Heart right ventricle (tissue), 16 donors: ENCODE measurements at regions of chr19 and their contacts with region 1.

Region 1: GRCh38 chr19:8654591-8655339 is 24.3 kb downstream of the NFILZ start:
- DNase-seq: peak in 1 of 2 donors; percentile 58
- ATAC-seq: peak in 6 of 8 donors; percentile 49 to 82 (median 66)
- H3K4me3 ChIP-seq: peak overlapping the region in 4 of 10 donors; percentile 11 to 25 (median 19)
- H3K27ac ChIP-seq: no peak overlapping the region
- H3K4me1 ChIP-seq: peaks cover 0 to 23% (median 0%) of the 10 kb centered on the region in 9 donors
- H3K27me3 ChIP-seq: peaks cover 0 to 40% (median 28%) of the 10 kb centered on the region in 7 donors
- CTCF ChIP-seq: peak; percentile 96 to 99 (median 98)

Region 2: GRCh38 chr19:8690753-8691539 is 36.2 kb after region 1 on chr19:
- intact Hi-C with region 1: loop called in 1 of 10 experiments (anchors 5 kb)
- DNase-seq: no peak
- ATAC-seq: no peak
- H3K4me3 ChIP-seq: no peak overlapping the region
- H3K27ac ChIP-seq: no peak overlapping the region
- H3K4me1 ChIP-seq: no peaks in the 10 kb centered on the region
- H3K27me3 ChIP-seq: peaks cover 0 to 55% (median 15%) of the 10 kb centered on the region in 7 donors
- CTCF ChIP-seq: no peak

Region 3: DNA sequence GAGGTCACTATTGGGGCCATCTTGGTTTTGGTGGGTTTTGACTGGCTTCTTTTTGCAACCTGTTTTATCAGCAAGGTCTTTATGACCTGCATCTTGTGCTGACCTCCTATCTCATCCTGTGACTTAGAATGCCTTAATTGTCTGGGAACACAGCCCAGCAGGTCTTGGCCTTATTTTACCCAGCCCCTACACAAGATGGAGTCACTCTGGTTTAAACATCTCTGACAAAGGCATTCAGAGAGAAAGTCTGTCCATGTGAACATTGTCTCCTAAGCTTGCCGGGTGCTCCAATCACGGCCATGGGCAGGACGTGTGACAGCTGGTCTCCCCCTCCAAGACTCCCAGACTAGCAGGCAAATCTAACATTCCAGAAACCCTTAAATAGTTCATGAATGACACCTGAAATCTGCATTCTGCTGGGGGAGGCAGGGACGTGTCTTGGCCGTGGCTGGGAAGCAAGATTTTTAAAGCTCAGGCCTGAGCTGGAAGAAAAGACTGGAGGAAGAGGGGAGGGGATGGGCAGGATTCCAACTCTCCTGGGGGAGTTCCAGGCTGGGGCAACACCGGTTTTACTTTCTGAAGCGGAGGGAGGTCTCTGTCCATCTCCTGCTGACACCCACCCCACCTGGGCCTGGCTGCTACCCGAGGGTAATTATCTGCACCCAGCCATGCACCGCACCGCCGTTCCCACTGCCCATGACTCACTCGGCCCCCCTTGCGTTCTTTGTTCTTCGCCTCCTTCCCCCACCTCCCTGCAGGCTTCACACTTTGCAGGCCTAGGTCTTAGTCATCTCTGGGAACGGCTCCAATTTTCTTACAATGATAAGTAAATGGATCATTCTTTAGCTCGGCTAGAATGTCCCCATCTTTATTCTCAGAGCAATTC is 420.5 kb after region 1 on chr19:
- intact Hi-C with region 1: loop called in 7 of 10 experiments (anchors 1 to 2 kb)
- DNase-seq: peak; percentile 44 to 61
- ATAC-seq: peak; percentile 76 to 97 (median 90)
- H3K4me3 ChIP-seq: peak overlapping the region in 1 of 10 donors; percentile 8
- H3K27ac ChIP-seq: no peak overlapping the region
- H3K4me1 ChIP-seq: peaks cover 0 to 13% (median 8%) of the 10 kb centered on the region in 9 donors
- H3K27me3 ChIP-seq: peaks cover 0 to 3% (median 0%) of the 10 kb centered on the region in 7 donors
- CTCF ChIP-seq: no peak